Activated naive CD4-positive, alpha-beta T cell treated with anti-CD3 and anti-CD28 coated beads for 36 hours (primary cell): ENCODE measurements at regions of chr2 and their contacts with region 1.

Region 1: DNA sequence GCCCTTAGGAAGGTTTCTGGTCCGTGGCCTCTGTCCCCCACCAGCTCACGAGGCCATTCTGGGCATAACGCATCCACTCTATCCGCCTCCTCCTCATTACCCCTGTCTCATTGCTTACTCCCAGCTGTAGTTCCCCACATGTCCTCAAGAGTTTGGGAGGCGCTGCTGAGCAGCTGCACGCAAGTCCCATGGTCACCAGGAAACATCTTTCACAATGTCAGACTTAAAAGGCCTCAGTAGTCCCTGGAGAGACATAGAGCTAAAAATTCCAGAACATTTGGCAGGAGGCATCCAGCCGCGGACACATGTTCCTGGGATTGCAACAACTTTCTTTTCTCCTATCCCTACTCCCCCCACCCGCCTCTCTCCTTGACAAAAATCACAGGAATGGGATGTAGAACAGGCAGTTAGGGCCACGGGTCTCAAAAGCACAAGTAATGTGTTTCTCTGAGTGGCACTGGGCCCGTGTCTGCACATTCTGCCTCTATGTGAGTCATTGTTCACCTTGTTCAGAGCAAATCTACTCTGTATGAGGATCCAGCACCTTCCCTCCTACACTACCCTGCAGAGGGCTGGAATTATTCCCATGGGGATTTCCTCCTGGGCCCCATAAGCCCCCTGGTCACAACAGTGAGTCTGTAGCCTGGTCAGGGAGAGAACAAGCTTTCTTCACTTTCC is 8.1 kb downstream of the LBH start:
- DNase-seq: peak; percentile 86
- H3K4me3 Mint-ChIP-seq: peak overlapping the region; percentile 45
- H3K27ac Mint-ChIP-seq: peak overlapping the region; percentile 79
- H3K4me1 Mint-ChIP-seq: peaks cover 93% of the 10 kb centered on the region
- H3K27me3 Mint-ChIP-seq: no peaks in the 10 kb centered on the region

Region 2: GRCh38 chr2:30252723-30253701 is 13.6 kb after region 1 on chr2:
- CTCF ChIA-PET with region 1: interaction called, 68 read pairs
- intact Hi-C with region 1: loop called (anchors 1 kb)
- DNase-seq: peak; percentile 87
- H3K4me3 Mint-ChIP-seq: peak overlapping the region; percentile 14
- H3K27ac Mint-ChIP-seq: peak overlapping the region; percentile 81
- H3K4me1 Mint-ChIP-seq: peaks cover 94% of the 10 kb centered on the region
- H3K27me3 Mint-ChIP-seq: no peaks in the 10 kb centered on the region

Region 3: GRCh38 chr2:30266051-30266621 is 26.7 kb after region 1 on chr2:
- CTCF ChIA-PET with region 1: interaction called, 15 read pairs
- intact Hi-C with region 1: loop called (anchors 1 kb)
- DNase-seq: peak; percentile 73
- H3K4me3 Mint-ChIP-seq: peak overlapping the region; percentile 79
- H3K27ac Mint-ChIP-seq: peak overlapping the region; percentile 89
- H3K4me1 Mint-ChIP-seq: peaks cover 81% of the 10 kb centered on the region
- H3K27me3 Mint-ChIP-seq: no peaks in the 10 kb centered on the region

Region 4: DNA sequence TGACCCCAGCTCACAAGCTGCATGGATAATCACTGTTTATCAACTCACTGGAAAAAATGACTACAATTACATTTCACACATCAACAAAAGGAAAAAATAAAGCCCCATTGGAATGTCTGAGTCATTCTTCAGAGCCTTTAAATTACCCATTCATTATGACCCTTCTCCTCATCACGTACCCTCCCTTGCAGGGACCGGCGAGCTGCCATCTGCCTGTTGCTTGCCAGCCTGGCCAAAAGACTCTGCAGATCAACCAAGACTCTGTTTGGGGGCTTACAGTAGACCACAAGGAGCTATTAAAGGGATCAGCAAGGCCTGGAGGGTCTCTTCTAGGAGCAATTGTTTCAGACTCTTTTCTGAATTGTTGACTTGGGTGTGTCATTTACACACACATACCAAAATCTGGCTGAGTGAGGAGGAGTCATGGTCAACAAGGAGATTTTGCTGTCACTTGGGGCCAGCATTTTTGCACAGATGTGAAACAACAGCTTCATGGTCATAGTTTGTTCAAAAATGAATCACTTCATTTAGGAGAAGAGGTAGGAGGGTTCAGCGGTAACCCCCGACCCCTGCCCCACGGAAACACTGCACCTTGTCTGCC is 33.9 kb after region 1 on chr2:
- CTCF ChIA-PET with region 1: interaction called, 6 read pairs
- intact Hi-C with region 1: loop called (anchors 1 kb)
- DNase-seq: peak; percentile 60
- H3K4me3 Mint-ChIP-seq: no peak overlapping the region
- H3K27ac Mint-ChIP-seq: peak overlapping the region; percentile 68
- H3K4me1 Mint-ChIP-seq: peaks cover 78% of the 10 kb centered on the region
- H3K27me3 Mint-ChIP-seq: no peaks in the 10 kb centered on the region

Region 5: DNA sequence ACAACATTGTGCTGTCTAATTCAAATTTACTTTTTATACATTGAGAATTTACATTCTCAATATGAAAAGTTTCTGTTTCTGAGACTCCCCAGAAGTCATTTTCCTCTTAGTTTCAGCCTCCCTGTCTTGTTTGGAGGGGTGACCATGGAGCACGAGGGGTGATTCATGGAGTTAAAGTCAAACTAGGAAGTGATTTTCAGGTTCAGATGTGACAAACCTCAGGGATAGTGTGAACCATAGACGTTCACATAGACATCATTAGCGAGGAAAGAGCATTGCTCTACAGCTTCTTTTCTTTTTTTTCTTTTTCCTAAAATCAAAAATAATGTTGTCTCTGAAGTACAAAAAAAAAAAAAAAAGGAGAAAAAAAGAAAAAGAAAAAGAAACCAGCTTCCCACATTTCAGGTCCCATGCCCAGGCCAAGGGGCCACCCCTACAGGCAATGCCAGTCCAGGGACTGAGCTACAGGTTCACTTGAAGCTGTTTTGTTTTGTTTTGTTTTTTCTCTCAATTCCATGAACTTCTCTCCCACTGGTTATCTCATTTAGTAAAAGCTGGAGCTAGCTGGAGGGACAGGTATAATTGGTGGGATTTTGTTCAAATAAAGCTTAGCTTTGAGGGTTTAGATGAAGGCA is 189.5 kb after region 1 on chr2:
- CTCF ChIA-PET with region 1: interaction called, 11 read pairs
- intact Hi-C with region 1: no loop called
- DNase-seq: peak; percentile 54
- H3K4me3 Mint-ChIP-seq: peak overlapping the region; percentile 36
- H3K27ac Mint-ChIP-seq: peak overlapping the region; percentile 82
- H3K4me1 Mint-ChIP-seq: peaks cover 48% of the 10 kb centered on the region
- H3K27me3 Mint-ChIP-seq: no peaks in the 10 kb centered on the region